K562 (cell line): ENCODE measurements at regions of chr6 and their contacts with region 1.

Region 1: DNA sequence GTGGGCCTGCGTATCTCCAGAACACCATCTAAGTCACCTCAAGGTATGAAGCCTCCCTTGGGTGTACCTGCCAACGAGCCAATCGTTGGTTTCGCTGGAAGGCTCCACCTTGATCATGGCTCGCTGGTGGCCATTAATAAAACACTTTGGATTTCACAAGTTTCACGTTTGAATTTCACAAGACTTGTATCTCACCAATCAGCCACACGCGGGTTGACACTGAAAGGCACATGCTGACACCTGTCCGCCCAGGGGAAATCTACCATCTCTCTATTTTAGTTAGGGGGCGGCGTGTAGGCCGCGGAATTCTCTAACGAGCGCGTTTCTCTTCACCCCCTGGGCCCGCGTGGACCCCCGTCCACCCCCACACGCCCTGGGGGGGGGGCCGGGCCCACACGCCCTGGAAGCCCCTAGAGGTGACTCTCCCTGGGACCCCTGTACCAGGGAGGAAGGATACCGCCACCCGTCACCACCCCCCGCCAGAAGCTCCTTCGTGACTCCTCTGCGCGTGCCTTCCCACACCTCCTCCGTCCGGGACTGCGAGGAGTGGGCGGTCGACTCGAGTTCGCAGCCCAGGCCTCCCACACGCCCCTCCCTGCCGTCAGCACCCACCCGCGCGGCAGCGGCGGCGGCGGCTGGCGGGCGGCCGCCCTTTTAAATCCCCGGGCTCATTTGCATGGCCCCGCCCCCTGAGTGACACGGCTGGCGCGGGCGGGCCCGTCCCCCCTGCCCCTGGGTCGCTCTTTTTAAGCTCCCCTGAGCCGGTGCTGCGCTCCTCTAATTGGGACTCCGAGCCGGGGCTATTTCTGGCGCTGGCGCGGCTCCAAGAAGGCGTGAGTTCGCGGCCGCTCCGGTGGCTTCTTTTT is at the start of gene HMGA1:
- DNase-seq: peak; percentile 88 to 98 (median 94)
- ATAC-seq: peak; percentile 82
- H3K4me3 ChIP-seq: peak within 1 kb of the TSS; percentile 85
- H3K27ac ChIP-seq: peak within 1 kb of the TSS; percentile 98
- H3K4me1 ChIP-seq: peaks cover 41 to 45% of the 10 kb centered on the region in 2 experiments
- H3K27me3 ChIP-seq: no peaks in the 10 kb centered on the region
- CTCF ChIP-seq: no peak
- EP300 ChIP-seq: no peak; the same call in 1 of the 2 replicates
- POLR2A ChIP-seq: peak; percentile 100
- RAD21 ChIP-seq: peak in 1 of 2 experiments; percentile 19; a peak in 1 of 4 replicates
- polyA plus RNA-seq, gene HMGA1: 27.8 to 58.8 TPM

Region 2: DNA sequence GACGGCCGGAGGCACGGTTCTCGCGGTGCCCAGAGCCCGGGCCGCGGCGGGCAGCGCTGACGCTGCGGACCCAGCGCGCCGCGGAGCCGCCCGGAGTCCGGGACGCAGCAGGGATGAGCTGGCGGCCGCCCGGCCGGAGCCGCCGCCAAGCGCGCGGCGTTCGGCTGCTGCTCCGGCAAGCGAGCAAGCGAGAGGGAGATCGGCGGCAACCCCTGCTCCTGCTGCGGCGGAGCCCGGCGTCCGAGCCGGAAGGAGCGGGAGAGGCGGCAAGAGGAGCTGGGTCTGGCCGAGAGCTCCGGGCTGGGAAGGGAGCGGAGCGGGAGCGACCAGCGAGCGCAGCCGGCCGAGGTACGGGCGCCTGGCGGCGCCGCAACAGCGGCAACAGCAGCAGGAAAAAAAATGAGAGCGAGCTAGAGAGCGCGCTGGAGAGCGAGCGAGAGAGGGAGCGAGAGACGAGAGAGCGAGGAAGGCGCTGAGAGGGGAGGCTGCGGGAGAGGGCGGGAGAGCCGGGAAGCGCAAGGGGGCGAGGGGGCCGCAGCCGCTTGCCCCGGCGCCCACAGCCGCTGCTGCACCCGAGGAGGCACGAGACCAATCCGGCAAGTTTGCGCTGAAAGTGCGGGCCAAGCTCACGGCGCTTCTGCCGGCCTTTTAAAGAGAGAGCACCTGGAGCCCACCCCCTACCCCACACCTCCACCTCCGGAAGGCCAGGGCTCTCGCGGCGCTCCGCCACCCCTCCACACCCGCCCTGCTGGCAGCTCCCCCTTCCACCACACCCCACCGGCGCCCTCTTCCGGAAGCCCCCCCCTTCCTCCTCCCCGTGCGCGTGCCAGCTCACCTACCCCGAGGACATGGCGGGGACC is 91.0 kb before region 1 on chr6:
- CTCF ChIA-PET with region 1: no interaction called
- POLR2A ChIA-PET with region 1: no interaction called
- in situ Hi-C with region 1: no loop called
- intact Hi-C with region 1: no loop called
- DNase-seq: peak in 3 of 4 experiments; percentile 21 to 51 (median 48)
- ATAC-seq: no peak
- H3K4me3 ChIP-seq: no peak overlapping the region
- H3K27ac ChIP-seq: no peak overlapping the region
- H3K4me1 ChIP-seq: peaks cover 0 to 41% of the 10 kb centered on the region in 2 experiments; a peak in 2 of 5 replicates
- H3K27me3 ChIP-seq: peaks cover 18 to 75% of the 10 kb centered on the region in 2 experiments; a peak in 4 of 5 replicates
- CTCF ChIP-seq: no peak
- EP300 ChIP-seq: no peak
- POLR2A ChIP-seq: no peak
- RAD21 ChIP-seq: no peak

Region 3: DNA sequence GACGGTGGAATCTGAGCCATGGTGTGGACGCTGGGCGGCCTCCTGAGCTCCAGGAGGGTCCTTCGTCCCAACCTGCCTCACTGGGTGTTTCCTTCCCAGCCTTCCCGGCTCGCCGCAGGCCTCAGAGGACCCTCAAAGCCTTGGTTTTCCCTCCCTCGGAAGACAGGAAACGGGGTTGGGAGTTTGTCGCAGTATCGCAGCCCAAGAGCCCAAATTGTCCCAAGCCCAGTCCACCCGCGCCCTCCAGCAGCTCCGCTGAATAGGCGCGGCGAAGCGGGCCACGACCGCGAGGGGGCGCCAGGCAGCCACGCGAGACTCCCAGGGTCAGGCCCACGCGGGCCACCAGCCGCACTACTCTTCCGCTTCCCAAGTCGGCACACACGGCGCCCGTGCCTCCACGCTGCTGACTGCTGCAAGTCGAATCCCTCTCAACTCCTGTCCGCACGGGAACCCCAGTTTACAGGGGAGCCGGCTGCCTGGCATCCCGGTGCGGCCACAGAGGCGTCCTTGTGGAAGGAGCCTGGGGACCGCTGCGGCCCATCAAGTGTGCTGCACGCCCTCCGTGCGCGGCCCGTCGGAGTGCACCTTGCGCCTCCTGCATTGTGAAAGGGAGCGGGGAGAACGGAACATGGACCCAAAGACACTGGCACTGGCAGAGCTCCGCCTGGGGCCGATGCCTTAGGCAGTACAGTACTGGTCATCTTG is 40.1 kb before region 1 on chr6:
- CTCF ChIA-PET with region 1: interaction called, 6 read pairs
- POLR2A ChIA-PET with region 1: interaction called, 13 read pairs
- in situ Hi-C with region 1: no loop called
- intact Hi-C with region 1: no loop called
- DNase-seq: peak; percentile 94 to 96 (median 95)
- ATAC-seq: peak; percentile 97
- H3K4me3 ChIP-seq: no peak overlapping the region; the same call in 1 of the 2 replicates
- H3K27ac ChIP-seq: peak overlapping the region; percentile 46; the same call in 1 of the 3 replicates
- H3K4me1 ChIP-seq: peaks cover 13 to 22% of the 10 kb centered on the region in 2 experiments; a peak in 4 of 5 replicates
- H3K27me3 ChIP-seq: no peaks in the 10 kb centered on the region
- CTCF ChIP-seq: peak; percentile 94 to 98 (median 96)
- EP300 ChIP-seq: peak; percentile 39; the same call in 1 of the 2 replicates
- POLR2A ChIP-seq: peak; percentile 62
- RAD21 ChIP-seq: peak; percentile 97 to 99

Region 4: GRCh38 chr6:34223956-34224940 is 12.1 kb before region 1 on chr6:
- CTCF ChIA-PET with region 1: no interaction called
- POLR2A ChIA-PET with region 1: interaction called, 34 read pairs
- in situ Hi-C with region 1: no loop called
- intact Hi-C with region 1: no loop called
- DNase-seq: peak; percentile 97 to 99 (median 98)
- ATAC-seq: peak; percentile 95
- H3K4me3 ChIP-seq: peak overlapping the region; percentile 43
- H3K27ac ChIP-seq: peak overlapping the region; percentile 93
- H3K4me1 ChIP-seq: peaks cover 43 to 45% of the 10 kb centered on the region in 2 experiments
- H3K27me3 ChIP-seq: no peaks in the 10 kb centered on the region
- CTCF ChIP-seq: no peak
- EP300 ChIP-seq: peak; percentile 46; the same call in 1 of the 2 replicates
- POLR2A ChIP-seq: peak; percentile 86
- RAD21 ChIP-seq: no peak